Activated CD4-positive, alpha-beta T cell treated with anti-CD3 and anti-CD28 coated beads, Interleukin-2, amount 10 ng/mL, durations not matched to agents 24 days and 14 days (primary cell): ENCODE measurements at regions of chr1 and their contacts with region 1.

Region 1: GRCh38 chr1:151130987-151131586 is 15.3 kb downstream of the SEMA6C start:
- DNase-seq: peak; percentile 91
- H3K4me3 Mint-ChIP-seq: peak overlapping the region; percentile 70
- H3K27ac Mint-ChIP-seq: peak overlapping the region; percentile 49
- H3K4me1 Mint-ChIP-seq: peaks cover 6% of the 10 kb centered on the region
- H3K27me3 Mint-ChIP-seq: peaks cover 7% of the 10 kb centered on the region

Region 2: DNA sequence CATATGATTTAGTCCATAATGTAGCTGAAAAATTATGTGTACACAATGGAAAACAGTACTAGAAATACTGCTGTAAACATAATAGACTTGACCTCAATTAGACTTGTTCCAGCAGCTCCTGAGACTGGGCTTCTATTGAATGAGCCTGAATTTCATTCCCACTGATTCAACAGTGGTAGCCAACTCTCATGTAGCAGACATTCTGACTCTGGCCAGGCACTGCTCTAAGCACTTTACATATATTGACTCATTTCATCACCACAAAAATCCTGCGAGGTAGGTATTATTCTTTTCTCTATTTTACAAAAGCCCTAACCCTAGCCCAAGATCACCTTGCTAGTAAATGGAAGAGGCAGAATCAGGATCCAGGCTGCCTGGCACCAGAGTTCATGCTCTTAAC is 352.7 kb before region 1 on chr1:
- intact Hi-C with region 1: no loop called
- DNase-seq: no peak
- H3K4me3 Mint-ChIP-seq: no peak overlapping the region
- H3K27ac Mint-ChIP-seq: no peak overlapping the region
- H3K4me1 Mint-ChIP-seq: peaks cover 10% of the 10 kb centered on the region
- H3K27me3 Mint-ChIP-seq: no peaks in the 10 kb centered on the region

Region 3: GRCh38 chr1:151146412-151147140 is 15.5 kb after region 1 on chr1 and contains the start of gene SEMA6C:
- intact Hi-C with region 1: loop called (anchors 2 kb)
- DNase-seq: peak; percentile 98
- H3K4me3 Mint-ChIP-seq: peak within 1 kb of the TSS; percentile 90
- H3K27ac Mint-ChIP-seq: peak within 1 kb of the TSS; percentile 64
- H3K4me1 Mint-ChIP-seq: peaks cover 14% of the 10 kb centered on the region
- H3K27me3 Mint-ChIP-seq: peaks cover 18% of the 10 kb centered on the region
- total RNA-seq, gene SEMA6C: 2.3 and 2.5 TPM in 2 replicates

Region 4: DNA sequence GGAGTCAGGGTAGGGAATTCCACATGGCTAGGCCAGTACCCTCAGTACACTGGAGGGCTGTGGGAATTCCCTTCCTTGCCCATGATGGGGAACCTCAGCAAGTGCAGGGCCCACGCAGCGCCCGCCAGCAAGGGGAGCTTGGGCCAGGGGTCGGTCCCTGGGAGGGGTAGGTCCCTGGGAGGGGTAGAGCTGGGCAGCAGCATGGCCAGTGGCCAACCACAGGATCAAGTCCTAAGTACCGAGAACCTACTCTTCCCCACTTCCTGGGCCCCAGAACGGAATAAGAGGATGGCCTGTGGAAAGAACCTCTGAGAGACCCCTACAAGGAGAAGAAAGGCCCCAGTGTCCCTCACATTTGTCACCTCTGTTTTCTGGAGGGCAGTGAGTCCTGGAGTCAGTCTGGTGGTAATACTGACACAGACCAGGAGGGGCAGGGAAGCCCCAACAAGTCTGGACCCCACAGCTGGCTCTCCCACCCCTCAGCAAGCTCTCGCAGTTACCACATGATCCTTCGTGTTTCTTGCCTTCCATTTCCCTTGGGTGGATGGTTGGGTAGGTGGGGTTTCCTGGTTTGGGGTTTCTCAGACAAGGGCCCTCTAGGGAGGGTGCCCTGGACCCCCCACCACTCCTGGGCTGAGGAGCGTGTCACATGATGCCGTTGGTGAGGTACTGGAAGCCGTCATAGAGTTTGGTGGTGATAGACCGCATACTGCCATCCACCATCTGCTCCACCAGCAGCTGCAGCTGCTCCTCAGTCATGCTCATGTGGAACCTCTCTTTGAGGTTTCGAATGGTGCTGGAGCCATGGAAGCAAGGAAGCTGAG is 161.3 kb after region 1 on chr1:
- intact Hi-C with region 1: no loop called
- DNase-seq: no peak
- H3K4me3 Mint-ChIP-seq: no peak overlapping the region
- H3K27ac Mint-ChIP-seq: no peak overlapping the region
- H3K4me1 Mint-ChIP-seq: peaks cover 3% of the 10 kb centered on the region
- H3K27me3 Mint-ChIP-seq: no peaks in the 10 kb centered on the region